ENCODE measurements at regions of chr17 and their contacts with region 1.

Region 1: GRCh38 chr17:78250891-78251794 is 19.7 kb downstream of the TMEM235 start:
- DNase-seq: peak; percentile 83
- H3K4me3 Mint-ChIP-seq: no peak overlapping the region
- H3K27ac Mint-ChIP-seq: no peak overlapping the region
- H3K4me1 Mint-ChIP-seq: peaks cover 12% of the 10 kb centered on the region
- H3K27me3 Mint-ChIP-seq: no peaks in the 10 kb centered on the region
- CTCF ChIP-seq: peak; percentile 98

Region 2: DNA sequence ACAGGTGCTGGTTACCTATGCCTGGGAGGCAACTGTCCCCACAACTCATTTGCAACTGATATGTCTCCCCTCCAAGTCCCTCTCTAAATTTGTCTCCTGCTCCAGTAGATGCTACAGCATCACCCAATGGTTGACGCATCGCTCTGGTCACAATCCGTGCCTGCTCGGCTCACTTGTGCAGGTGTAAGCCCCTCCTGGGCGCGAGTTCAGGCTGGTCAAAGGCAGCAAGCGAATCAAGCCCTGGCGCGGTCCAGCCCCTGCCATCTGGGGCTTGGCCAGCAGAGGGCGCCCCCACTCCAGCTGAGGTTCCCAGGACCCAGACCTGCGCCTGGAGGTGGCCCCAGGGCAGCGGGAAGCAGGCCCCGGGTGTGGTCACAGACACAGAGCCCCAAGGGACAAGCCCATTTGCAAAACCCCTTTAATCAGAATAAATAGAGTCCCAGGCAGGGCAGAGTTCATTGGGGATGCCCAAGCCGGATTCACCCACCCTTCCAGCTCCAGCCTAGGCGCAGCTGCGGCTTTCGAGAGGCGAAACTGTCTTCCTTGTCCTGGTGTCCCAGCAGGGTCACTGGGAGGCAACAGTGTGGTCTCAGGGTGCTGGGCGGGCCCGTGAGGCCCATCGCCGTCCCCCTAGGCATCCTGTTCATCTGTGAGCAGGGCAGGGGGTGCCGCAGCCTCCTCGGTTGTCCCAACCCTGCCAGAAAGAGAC is 138.5 kb before region 1 on chr17:
- CTCF ChIA-PET with region 1: interaction called, 20 read pairs
- POLR2A ChIA-PET with region 1: interaction called, 3 read pairs
- intact Hi-C with region 1: loop called (anchors 1 kb)
- DNase-seq: peak; percentile 65
- H3K4me3 Mint-ChIP-seq: no peak overlapping the region
- H3K27ac Mint-ChIP-seq: no peak overlapping the region
- H3K4me1 Mint-ChIP-seq: peaks cover 5% of the 10 kb centered on the region
- H3K27me3 Mint-ChIP-seq: peaks cover 11% of the 10 kb centered on the region
- CTCF ChIP-seq: peak; percentile 99

Region 3: GRCh38 chr17:78226749-78227399 is 24.3 kb before region 1 on chr17:
- CTCF ChIA-PET with region 1: interaction called, 11 read pairs
- POLR2A ChIA-PET with region 1: no interaction called
- intact Hi-C with region 1: no loop called
- DNase-seq: no peak
- H3K4me3 Mint-ChIP-seq: no peak overlapping the region
- H3K27ac Mint-ChIP-seq: no peak overlapping the region
- H3K4me1 Mint-ChIP-seq: no peaks in the 10 kb centered on the region
- H3K27me3 Mint-ChIP-seq: peaks cover 14% of the 10 kb centered on the region
- CTCF ChIP-seq: no peak

Region 4: DNA sequence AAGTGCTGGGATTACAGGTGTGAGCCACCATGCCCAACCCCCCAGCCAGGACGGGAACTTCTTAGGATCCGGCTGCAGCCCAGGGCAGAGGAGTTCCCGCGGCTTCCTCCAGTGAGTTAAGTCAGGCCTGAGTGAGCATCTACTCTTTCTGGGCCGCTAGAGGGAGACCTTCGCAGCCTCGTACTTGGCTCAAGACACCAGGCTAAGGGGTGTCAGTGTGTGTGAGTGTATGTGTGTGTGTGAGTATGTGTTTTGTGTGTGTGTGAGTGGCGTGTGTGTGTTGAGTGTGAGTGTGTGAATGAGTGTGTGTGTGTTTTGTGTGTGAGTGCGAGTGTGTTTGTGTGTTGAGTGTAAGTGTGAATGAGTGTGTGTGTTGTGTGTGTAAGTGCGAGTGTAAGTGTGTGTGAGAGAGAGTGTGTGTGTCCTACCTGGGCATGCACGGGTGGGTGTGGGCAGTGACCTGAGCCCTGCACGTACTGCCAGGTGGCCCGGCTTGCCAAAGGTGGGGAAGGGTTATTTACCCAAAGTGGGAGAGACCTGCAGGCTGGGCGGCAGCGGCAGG is 38.7 kb after region 1 on chr17:
- CTCF ChIA-PET with region 1: interaction called, 11 read pairs
- POLR2A ChIA-PET with region 1: no interaction called
- intact Hi-C with region 1: no loop called
- DNase-seq: peak; percentile 85
- H3K4me3 Mint-ChIP-seq: no peak overlapping the region
- H3K27ac Mint-ChIP-seq: no peak overlapping the region
- H3K4me1 Mint-ChIP-seq: peaks cover 8% of the 10 kb centered on the region
- H3K27me3 Mint-ChIP-seq: no peaks in the 10 kb centered on the region
- CTCF ChIP-seq: peak; percentile 85

Region 5: GRCh38 chr17:78484300-78485246 is 233.4 kb after region 1 on chr17:
- CTCF ChIA-PET with region 1: no interaction called
- POLR2A ChIA-PET with region 1: no interaction called
- intact Hi-C with region 1: no loop called
- DNase-seq: no peak
- H3K4me3 Mint-ChIP-seq: no peak overlapping the region
- H3K27ac Mint-ChIP-seq: no peak overlapping the region
- H3K4me1 Mint-ChIP-seq: no peaks in the 10 kb centered on the region
- H3K27me3 Mint-ChIP-seq: peaks cover 30% of the 10 kb centered on the region
- CTCF ChIP-seq: no peak